ENCODE measurements at regions of chr2 and their contacts with region 1.

Region 1: DNA sequence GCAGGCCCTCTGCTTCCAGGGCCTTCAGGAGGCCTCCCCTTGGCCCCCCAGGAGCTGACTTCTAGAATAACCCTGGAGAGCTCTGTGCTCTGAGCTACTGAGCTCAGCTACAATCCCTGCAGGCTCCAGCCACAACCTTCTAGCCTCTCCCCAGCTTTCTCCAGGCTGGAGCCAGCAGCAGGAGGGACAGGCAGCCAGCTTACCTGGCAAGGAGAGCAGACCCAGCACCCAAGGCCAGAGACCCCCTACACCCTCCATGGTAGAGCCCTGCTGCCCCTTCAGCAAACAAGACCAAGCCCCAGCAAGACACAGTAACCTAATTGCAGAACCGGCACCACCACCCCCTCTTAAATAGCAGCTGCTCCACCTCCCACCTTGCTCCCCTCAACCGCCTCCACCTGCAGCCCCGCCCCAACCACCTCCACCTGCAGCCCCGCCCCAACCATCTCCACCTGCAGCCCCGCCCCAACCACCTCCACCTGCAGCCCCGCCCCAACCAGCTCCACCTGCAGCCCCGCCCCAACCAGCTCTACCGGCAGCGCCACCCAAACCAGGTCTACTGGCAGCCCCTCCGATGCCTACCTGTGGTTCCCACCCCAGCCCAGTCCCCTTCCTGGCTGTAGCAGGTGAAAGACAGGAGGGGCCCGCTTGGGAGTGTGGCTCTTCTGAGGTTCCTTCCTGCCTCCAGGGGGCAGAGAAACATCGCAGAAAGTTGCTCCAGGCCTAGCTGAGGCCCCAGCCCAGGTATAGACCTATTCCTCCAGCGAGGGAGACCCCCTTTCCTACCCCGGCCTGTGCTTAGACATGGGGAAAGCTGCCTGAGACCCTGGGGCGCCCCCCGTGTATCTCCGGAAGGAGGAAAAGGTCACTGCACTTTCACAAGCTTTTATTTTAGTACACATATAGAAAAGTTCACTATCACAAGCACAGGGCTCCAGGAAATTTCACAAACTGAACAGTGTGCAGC is at the start of gene ASTL:
- DNase-seq: no peak
- ATAC-seq: peak; percentile 78
- H3K4me3 ChIP-seq: 0 out of 4 replicates have a peak within 1 kb of the TSS, but pooled peaks of 1 of the 2 experiments have one; percentile 7
- H3K27ac ChIP-seq: peak within 1 kb of the TSS; percentile 18; the same call in 1 of the 2 replicates
- H3K4me1 ChIP-seq: peaks cover 4 to 19% of the 10 kb centered on the region in 2 experiments; a peak in 3 of 4 replicates
- H3K27me3 ChIP-seq: no peaks in the 10 kb centered on the region
- CTCF ChIP-seq: peak; percentile 64 to 66 (median 66)
- POLR2A ChIP-seq: no peak
- RAD21 ChIP-seq: peak; percentile 78
- total RNA-seq, gene ASTL: 0.34 TPM

Region 2: GRCh38 chr2:96174251-96175144 is 36.0 kb after region 1 on chr2:
- CTCF ChIA-PET with region 1: interaction called, 58 read pairs
- POLR2A ChIA-PET with region 1: no interaction called
- RAD21 ChIA-PET with region 1: interaction called, 12 to 16 read pairs
- intact Hi-C with region 1: loop called (anchors 1 kb)
- DNase-seq: peak; percentile 39
- ATAC-seq: peak; percentile 99
- H3K4me3 ChIP-seq: no peak overlapping the region
- H3K27ac ChIP-seq: no peak overlapping the region
- H3K4me1 ChIP-seq: peaks cover 0 to 3% of the 10 kb centered on the region in 2 experiments; a peak in 1 of 4 replicates
- H3K27me3 ChIP-seq: no peaks in the 10 kb centered on the region
- CTCF ChIP-seq: peak; percentile 94 to 97 (median 96)
- POLR2A ChIP-seq: no peak
- RAD21 ChIP-seq: peak; percentile 96

Region 3: GRCh38 chr2:96265840-96266679 is 127.6 kb after region 1 on chr2 and contains the starts of genes CIAO1 and TMEM127:
- CTCF ChIA-PET with region 1: interaction called, 8 read pairs
- POLR2A ChIA-PET with region 1: interaction called, 5 read pairs
- RAD21 ChIA-PET with region 1: no interaction called
- intact Hi-C with region 1: loop called (anchors 2 kb)
- DNase-seq: peak; percentile 90
- ATAC-seq: peak; percentile 96
- H3K4me3 ChIP-seq: peak within 1 kb of the TSS; percentile 89 to 93
- H3K27ac ChIP-seq: peak within 1 kb of the TSS; percentile 71
- H3K4me1 ChIP-seq: peaks cover 14 to 34% of the 10 kb centered on the region in 2 experiments
- H3K27me3 ChIP-seq: no peaks in the 10 kb centered on the region
- CTCF ChIP-seq: peak in 2 of 3 experiments; percentile 20 to 26; a peak in 2 of 6 replicates
- POLR2A ChIP-seq: peak; percentile 27
- RAD21 ChIP-seq: no peak
- total RNA-seq, gene CIAO1: 76.8 TPM
- total RNA-seq, gene TMEM127: 25.3 TPM

Region 4: DNA sequence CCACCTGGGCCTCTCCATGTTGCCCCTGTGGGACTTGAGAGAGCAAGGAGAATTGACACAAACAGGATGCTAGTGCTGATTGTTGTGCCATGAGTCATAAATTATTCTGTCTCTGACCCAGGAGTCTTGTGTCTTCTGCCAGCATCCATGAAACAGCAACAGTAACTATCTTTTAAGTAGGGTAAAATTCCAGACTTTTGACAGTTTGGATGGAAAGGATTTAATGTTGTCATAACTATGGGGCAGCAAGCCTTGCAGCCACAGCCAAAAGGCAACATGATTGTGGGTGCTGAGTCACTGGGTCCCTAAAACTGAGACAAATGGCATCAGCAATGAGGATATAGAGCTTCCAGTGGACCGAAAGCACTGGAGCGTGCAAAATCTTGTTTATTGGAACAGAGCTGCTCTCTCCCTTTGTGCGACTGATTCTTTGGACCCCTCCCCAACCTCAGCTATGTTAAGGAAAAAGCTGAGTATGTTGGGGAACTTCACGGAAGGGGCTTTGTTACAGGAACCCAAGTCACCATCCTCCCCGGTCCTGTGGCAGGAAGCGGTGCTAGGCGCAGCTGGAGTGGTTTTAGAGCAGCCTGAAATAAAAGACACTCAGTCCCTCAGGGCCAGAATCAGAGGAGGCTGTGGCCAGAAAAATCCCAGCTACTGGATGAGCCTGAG is 177.1 kb after region 1 on chr2:
- CTCF ChIA-PET with region 1: no interaction called
- POLR2A ChIA-PET with region 1: no interaction called
- RAD21 ChIA-PET with region 1: no interaction called
- intact Hi-C with region 1: no loop called
- DNase-seq: no peak
- ATAC-seq: peak; percentile 34; the same call in 1 of the 2 replicates
- H3K4me3 ChIP-seq: no peak overlapping the region
- H3K27ac ChIP-seq: no peak overlapping the region
- H3K4me1 ChIP-seq: peaks cover 0 to 14% of the 10 kb centered on the region in 2 experiments; a peak in 2 of 4 replicates
- H3K27me3 ChIP-seq: no peaks in the 10 kb centered on the region
- CTCF ChIP-seq: no peak
- POLR2A ChIP-seq: no peak
- RAD21 ChIP-seq: no peak

Region 5: GRCh38 chr2:96739633-96740428 is 601.4 kb after region 1 on chr2 and contains the start of gene LMAN2L:
- CTCF ChIA-PET with region 1: no interaction called
- POLR2A ChIA-PET with region 1: no interaction called
- RAD21 ChIA-PET with region 1: no interaction called
- intact Hi-C with region 1: no loop called
- DNase-seq: peak; percentile 90
- ATAC-seq: peak; percentile 100
- H3K4me3 ChIP-seq: peak within 1 kb of the TSS; percentile 91 to 95
- H3K27ac ChIP-seq: peak within 1 kb of the TSS; percentile 41
- H3K4me1 ChIP-seq: peaks cover 2 to 9% of the 10 kb centered on the region in 2 experiments; a peak in 3 of 4 replicates
- H3K27me3 ChIP-seq: no peaks in the 10 kb centered on the region
- CTCF ChIP-seq: no peak
- POLR2A ChIP-seq: peak; percentile 78
- RAD21 ChIP-seq: no peak
- total RNA-seq, gene LMAN2L: 15.2 TPM